Left cardiac atrium (tissue), 4 donors: ENCODE measurements at regions of chr3 and their contacts with region 1.

Region 1: GRCh38 chr3:196837819-196838420 is 29.8 kb upstream of the SENP5 start:
- DNase-seq: peak; percentile 65
- ATAC-seq: peak; percentile 73 to 81

Region 2: GRCh38 chr3:196569003-196569516 is 268.9 kb before region 1 on chr3:
- intact Hi-C with region 1: no loop called
- DNase-seq: peak; percentile 33
- ATAC-seq: no peak

Region 3: GRCh38 chr3:196969660-196970546 is 132.0 kb after region 1 on chr3:
- intact Hi-C with region 1: loop called (anchors 5 to 10 kb)
- DNase-seq: peak; percentile 70
- ATAC-seq: peak; percentile 86 to 89